A673 (cell line): ENCODE measurements at regions of chr20 and their contacts with region 1.

Region 1: DNA sequence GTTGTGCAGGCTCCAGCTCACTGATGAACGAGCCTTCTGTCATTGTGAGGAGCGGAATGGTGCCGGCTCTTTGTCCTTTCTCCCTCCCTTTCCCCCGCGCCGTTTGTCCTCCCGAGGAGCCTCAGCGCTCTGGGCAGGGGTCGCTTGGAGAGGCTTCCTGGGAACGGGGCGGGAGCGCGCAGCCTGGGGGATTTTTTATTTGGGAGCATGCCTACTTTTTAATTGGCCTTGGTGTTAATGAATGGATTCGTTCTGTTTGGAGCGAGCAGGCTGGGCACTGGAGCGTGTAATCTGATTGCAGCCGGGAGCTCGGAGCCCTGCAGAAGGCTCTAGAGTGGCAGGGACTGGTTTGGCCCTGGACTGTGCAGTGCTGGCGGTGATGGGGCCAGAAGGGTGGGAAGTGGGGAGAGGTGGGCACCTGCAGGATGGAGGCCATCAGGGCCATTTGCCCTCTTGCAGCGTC is 118.8 kb downstream of the CDH4 start:
- DNase-seq: no peak
- H3K4me3 ChIP-seq: peak overlapping the region; percentile 16
- H3K27ac ChIP-seq: no peak overlapping the region
- H3K4me1 ChIP-seq: peaks cover 7% of the 10 kb centered on the region
- H3K27me3 ChIP-seq: peaks cover 23% of the 10 kb centered on the region
- CTCF ChIP-seq: no peak

Region 2: DNA sequence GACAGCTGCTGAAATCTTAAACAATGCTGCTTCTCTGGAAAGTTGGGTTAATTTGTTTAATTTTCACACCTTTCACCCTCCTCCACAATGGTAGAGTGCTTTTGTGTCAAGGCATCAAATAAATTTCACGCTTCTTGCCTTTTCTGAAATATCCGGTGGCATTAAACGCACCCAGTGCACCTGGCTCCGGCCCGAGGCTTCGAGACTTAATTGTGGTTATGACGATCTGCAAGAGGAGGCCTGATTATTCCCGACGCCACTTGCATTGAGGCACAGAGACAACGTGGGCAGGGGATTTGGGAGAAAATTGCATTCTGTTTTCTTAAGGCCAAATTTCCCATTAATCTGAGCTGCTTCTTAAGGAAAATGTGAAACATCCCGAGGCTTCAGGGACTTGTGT is 33.4 kb after region 1 on chr20:
- CTCF ChIA-PET with region 1: no interaction called
- POLR2A ChIA-PET with region 1: interaction called, 22 read pairs
- intact Hi-C with region 1: no loop called
- DNase-seq: no peak
- H3K4me3 ChIP-seq: no peak overlapping the region
- H3K27ac ChIP-seq: no peak overlapping the region
- H3K4me1 ChIP-seq: no peaks in the 10 kb centered on the region
- H3K27me3 ChIP-seq: peaks cover 16% of the 10 kb centered on the region
- CTCF ChIP-seq: no peak

Region 3: GRCh38 chr20:61611401-61612180 is 240.7 kb after region 1 on chr20:
- CTCF ChIA-PET with region 1: no interaction called
- POLR2A ChIA-PET with region 1: no interaction called
- intact Hi-C with region 1: no loop called
- DNase-seq: no peak
- H3K4me3 ChIP-seq: no peak overlapping the region
- H3K27ac ChIP-seq: no peak overlapping the region
- H3K4me1 ChIP-seq: no peaks in the 10 kb centered on the region
- H3K27me3 ChIP-seq: peaks cover 15% of the 10 kb centered on the region
- CTCF ChIP-seq: no peak